ENCODE measurements at regions of chr2 and their contacts with region 1.

Region 1: DNA sequence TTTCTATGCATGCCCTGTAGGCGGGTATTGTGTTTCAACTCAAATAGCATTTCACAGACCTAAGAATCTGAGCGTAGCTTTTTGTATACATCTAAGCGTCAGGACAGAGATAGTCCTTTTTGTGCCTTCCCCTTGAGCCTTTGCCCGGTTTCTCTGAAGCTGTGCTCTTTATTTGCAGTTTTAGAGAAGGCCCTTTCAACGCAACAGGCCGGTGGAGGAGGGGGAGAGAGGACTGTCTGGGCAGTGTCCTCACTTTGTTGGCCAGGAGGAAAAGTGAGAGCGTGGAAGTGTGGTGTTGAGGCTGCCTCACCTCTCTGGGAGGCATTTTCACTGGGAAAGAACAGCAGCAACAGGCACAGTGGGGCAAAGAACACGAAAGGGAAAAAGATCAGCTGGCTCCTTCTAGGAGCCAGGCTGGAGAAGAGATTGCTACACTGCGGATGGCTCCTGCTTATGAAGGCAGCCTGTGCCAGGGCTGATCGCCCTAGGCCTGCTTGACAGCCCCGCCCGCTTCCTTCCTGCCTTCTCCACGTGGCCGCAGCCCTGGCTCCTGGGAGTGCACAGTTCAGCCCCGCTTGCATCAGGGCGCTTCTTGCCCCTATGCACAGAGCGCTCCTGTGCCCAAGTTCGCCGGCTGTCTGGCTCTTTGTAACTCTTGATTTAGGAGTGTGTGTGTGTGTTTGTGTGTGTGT is 195.6 kb upstream of the POU3F3 start:
- DNase-seq: peak; percentile 65 to 81 (median 71)
- ATAC-seq: peak; percentile 74 to 91 (median 82)
- H3K4me3 ChIP-seq: no peak overlapping the region
- H3K27ac ChIP-seq: peak overlapping the region; percentile 4 to 84 (median 70)
- H3K4me1 ChIP-seq: peaks cover 0 to 38% (median 14%) of the 10 kb centered on the region in 12 donors
- H3K27me3 ChIP-seq: peaks cover 0 to 48% (median 9%) of the 10 kb centered on the region in 9 donors
- CTCF ChIP-seq: no peak
- POLR2A ChIP-seq: peak in 1 of 2 donors; percentile 50

Region 2: GRCh38 chr2:104572834-104573233 is 85.5 kb before region 1 on chr2:
- intact Hi-C with region 1: no loop called
- DNase-seq: no peak
- ATAC-seq: no peak
- H3K4me3 ChIP-seq: no peak overlapping the region
- H3K27ac ChIP-seq: no peak overlapping the region
- H3K4me1 ChIP-seq: no peaks in the 10 kb centered on the region
- H3K27me3 ChIP-seq: no peaks in the 10 kb centered on the region
- CTCF ChIP-seq: no peak
- POLR2A ChIP-seq: no peak

Region 3: GRCh38 chr2:104690255-104690984 is 32.1 kb after region 1 on chr2:
- intact Hi-C with region 1: no loop called
- DNase-seq: no peak
- ATAC-seq: no peak
- H3K4me3 ChIP-seq: no peak overlapping the region
- H3K27ac ChIP-seq: no peak overlapping the region
- H3K4me1 ChIP-seq: no peaks in the 10 kb centered on the region
- H3K27me3 ChIP-seq: no peaks in the 10 kb centered on the region
- CTCF ChIP-seq: no peak
- POLR2A ChIP-seq: no peak

Region 4: GRCh38 chr2:104716052-104716451 is 57.8 kb after region 1 on chr2:
- intact Hi-C with region 1: no loop called
- DNase-seq: no peak
- ATAC-seq: no peak
- H3K4me3 ChIP-seq: no peak overlapping the region
- H3K27ac ChIP-seq: no peak overlapping the region
- H3K4me1 ChIP-seq: no peaks in the 10 kb centered on the region
- H3K27me3 ChIP-seq: no peaks in the 10 kb centered on the region
- CTCF ChIP-seq: no peak
- POLR2A ChIP-seq: no peak

Region 5: DNA sequence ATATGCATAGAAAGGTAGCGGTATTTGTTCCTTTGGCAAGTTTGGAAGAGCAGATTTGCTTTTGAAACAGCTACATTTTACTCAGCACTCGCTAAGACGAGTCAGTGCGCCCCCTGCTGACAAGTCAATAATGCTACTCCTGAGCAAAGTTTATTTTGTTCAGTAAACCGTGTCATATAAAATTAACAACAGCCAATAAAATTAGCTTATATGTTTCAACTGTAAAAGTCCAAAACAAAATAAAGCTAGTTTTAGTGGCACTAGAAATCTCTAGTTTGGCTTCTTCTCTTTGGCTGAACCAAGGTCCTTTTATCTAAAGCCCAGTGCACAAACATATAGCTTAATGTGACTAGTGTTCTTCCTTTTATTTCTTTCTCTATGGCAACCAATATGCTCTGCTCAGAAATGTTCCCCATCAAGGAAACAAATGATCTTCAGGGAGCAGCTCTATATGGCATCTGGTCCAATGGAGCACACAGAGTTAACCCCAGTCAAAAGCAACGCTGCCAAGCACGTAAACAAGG is 191.4 kb after region 1 on chr2:
- intact Hi-C with region 1: loop called in 1 of 10 experiments (anchors 5 kb)
- DNase-seq: peak in 4 of 5 donors; percentile 58 to 67 (median 66)
- ATAC-seq: no peak
- H3K4me3 ChIP-seq: no peak overlapping the region
- H3K27ac ChIP-seq: no peak overlapping the region
- H3K4me1 ChIP-seq: peaks cover 0 to 42% (median 24%) of the 10 kb centered on the region in 12 donors
- H3K27me3 ChIP-seq: peaks cover 64 to 98% (median 93%) of the 10 kb centered on the region in 9 donors
- CTCF ChIP-seq: peak; percentile 60 to 80 (median 72)
- POLR2A ChIP-seq: no peak

Measured in heart left ventricle (tissue), 16 donors.